CD4-positive, alpha-beta memory T cell (primary cell): ENCODE measurements at regions of chr3 and their contacts with region 1.

Region 1: GRCh38 chr3:38346587-38347410 is at the start of gene XYLB:
- DNase-seq: peak; percentile 54 to 75 (median 72)
- H3K4me3 ChIP-seq: peak within 1 kb of the TSS; percentile 11 to 57
- H3K4me3 Mint-ChIP-seq: peak within 1 kb of the TSS; percentile 80 to 89 (median 82)
- H3K27ac ChIP-seq: peak within 1 kb of the TSS; percentile 28
- H3K27ac Mint-ChIP-seq: peak within 1 kb of the TSS in 2 of 7 donors; percentile 31 to 62
- H3K4me1 ChIP-seq: peaks cover 17% of the 10 kb centered on the region
- H3K4me1 Mint-ChIP-seq: peaks cover 0 to 4% (median 3%) of the 10 kb centered on the region in 4 donors
- H3K27me3 ChIP-seq: no peaks in the 10 kb centered on the region
- H3K27me3 Mint-ChIP-seq: no peaks in the 10 kb centered on the region
- total RNA-seq, gene XYLB: 0.47 to 0.61 TPM

Region 2: GRCh38 chr3:37956723-37957528 is 389.9 kb before region 1 on chr3:
- CTCF ChIA-PET with region 1: no interaction called
- POLR2A ChIA-PET with region 1: no interaction called
- intact Hi-C with region 1: no loop called
- DNase-seq: peak in 2 of 5 donors; percentile 5 to 10
- H3K4me3 ChIP-seq: no peak overlapping the region
- H3K4me3 Mint-ChIP-seq: peak overlapping the region in 5 of 8 donors; percentile 21 to 69 (median 52)
- H3K27ac ChIP-seq: no peak overlapping the region
- H3K27ac Mint-ChIP-seq: peak overlapping the region; percentile 68 to 93 (median 88)
- H3K4me1 ChIP-seq: peaks cover 15% of the 10 kb centered on the region
- H3K4me1 Mint-ChIP-seq: peaks cover 13 to 30% (median 19%) of the 10 kb centered on the region in 4 donors
- H3K27me3 ChIP-seq: no peaks in the 10 kb centered on the region
- H3K27me3 Mint-ChIP-seq: no peaks in the 10 kb centered on the region

Region 3: GRCh38 chr3:38117748-38118420 is 228.9 kb before region 1 on chr3:
- CTCF ChIA-PET with region 1: interaction called, 38 read pairs
- POLR2A ChIA-PET with region 1: no interaction called
- intact Hi-C with region 1: loop called (anchors 1 kb)
- DNase-seq: peak; percentile 66 to 74 (median 70)
- H3K4me3 ChIP-seq: no peak overlapping the region
- H3K4me3 Mint-ChIP-seq: no peak overlapping the region
- H3K27ac ChIP-seq: no peak overlapping the region
- H3K27ac Mint-ChIP-seq: peak overlapping the region in 4 of 7 donors; percentile 25 to 86 (median 77)
- H3K4me1 ChIP-seq: no peaks in the 10 kb centered on the region
- H3K4me1 Mint-ChIP-seq: peaks cover 2 to 15% (median 6%) of the 10 kb centered on the region in 4 donors
- H3K27me3 ChIP-seq: no peaks in the 10 kb centered on the region
- H3K27me3 Mint-ChIP-seq: no peaks in the 10 kb centered on the region

Region 4: DNA sequence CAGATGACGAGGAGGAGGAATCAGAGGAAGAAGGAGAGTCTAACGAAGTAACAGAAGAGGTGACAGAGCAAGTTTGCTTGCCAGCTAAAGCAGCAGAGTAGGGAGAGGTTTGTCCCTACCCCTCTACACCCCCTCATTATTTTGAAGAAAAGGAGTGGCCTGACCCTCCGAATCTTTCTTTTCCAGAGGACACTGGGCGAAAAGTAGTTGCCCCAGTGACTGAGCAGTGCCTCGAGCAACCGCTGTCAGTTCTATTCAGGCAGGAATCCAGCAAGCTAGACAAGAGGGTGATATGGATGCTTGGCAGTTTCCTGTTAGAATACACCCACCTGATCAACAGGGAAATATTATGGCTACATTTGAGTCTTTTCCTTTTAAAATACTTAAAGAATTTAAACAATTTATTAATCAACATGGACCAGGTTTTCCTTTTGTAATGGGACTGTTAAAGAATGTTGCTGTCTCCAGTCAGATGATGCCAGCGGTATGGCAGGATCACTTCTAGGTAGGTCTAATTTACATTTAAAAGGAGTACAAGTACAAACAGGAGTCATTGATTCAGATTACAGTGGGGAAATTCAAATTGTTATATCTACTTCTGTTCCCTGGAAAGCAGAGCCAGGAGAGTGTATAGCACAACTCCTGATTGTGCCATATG is 75.0 kb after region 1 on chr3:
- CTCF ChIA-PET with region 1: interaction called, 20 read pairs
- POLR2A ChIA-PET with region 1: interaction called, 3 read pairs
- intact Hi-C with region 1: no loop called
- DNase-seq: no peak
- H3K4me3 ChIP-seq: no peak overlapping the region
- H3K4me3 Mint-ChIP-seq: peak overlapping the region in 3 of 8 donors; percentile 35 to 78 (median 54)
- H3K27ac ChIP-seq: no peak overlapping the region
- H3K27ac Mint-ChIP-seq: peak overlapping the region in 1 of 7 donors; percentile 89
- H3K4me1 ChIP-seq: peaks cover 40% of the 10 kb centered on the region
- H3K4me1 Mint-ChIP-seq: peaks cover 26 to 44% (median 32%) of the 10 kb centered on the region in 4 donors
- H3K27me3 ChIP-seq: no peaks in the 10 kb centered on the region
- H3K27me3 Mint-ChIP-seq: no peaks in the 10 kb centered on the region

Region 5: DNA sequence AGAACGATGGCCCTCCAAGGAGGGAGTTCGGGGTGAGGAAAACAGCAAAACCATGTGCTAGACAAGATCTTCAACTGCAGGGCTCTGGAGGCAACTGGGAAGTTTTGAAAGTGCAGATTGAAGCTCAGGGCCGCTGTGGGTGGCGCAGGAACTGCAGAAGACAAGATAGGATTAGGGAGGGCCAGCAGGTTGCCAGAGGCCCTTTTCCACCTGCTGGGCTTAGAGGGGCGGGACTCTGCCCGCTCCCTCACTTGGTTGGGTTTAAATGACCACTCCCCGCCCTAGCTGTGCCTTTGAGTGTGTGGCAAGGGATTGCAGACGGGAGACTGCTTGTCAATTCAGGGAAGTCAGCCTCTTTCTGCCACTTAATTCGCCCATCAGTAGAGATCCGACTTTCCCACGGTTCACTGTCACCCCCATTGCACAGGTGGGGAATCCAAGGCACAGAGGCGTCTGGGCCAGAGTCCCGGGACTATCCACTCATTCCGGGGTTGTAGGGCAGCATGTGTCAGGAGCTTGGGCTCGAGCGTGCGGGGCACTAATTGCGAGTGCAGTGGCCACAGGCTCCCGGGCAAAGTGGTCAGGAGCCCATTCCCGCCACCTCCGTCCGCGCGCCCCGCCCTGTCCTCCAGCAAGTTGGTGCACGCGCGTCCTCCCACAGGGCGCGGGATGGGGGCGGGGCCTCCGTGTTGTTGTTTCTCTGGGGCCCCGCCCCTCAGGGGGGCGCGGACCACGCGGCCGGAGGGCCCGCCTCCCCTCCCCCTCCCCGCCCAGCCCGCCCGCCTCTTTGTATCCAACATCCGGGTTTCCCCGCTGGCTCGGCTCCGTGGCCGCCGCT is 106.5 kb after region 1 on chr3 and contains the start of gene ACVR2B:
- CTCF ChIA-PET with region 1: interaction called, 21 read pairs
- POLR2A ChIA-PET with region 1: interaction called, 12 read pairs
- intact Hi-C with region 1: loop called (anchors 1 kb)
- DNase-seq: peak; percentile 56 to 62 (median 57)
- H3K4me3 ChIP-seq: peak within 1 kb of the TSS; percentile 72 to 78
- H3K4me3 Mint-ChIP-seq: peak within 1 kb of the TSS; percentile 96 to 100 (median 97)
- H3K27ac ChIP-seq: peak within 1 kb of the TSS; percentile 31
- H3K27ac Mint-ChIP-seq: peak within 1 kb of the TSS; percentile 41 to 95 (median 92)
- H3K4me1 ChIP-seq: peaks cover 17% of the 10 kb centered on the region
- H3K4me1 Mint-ChIP-seq: peaks cover 10 to 39% (median 19%) of the 10 kb centered on the region in 4 donors
- H3K27me3 ChIP-seq: no peaks in the 10 kb centered on the region
- H3K27me3 Mint-ChIP-seq: no peaks in the 10 kb centered on the region
- total RNA-seq, gene ACVR2B: 12.3 to 13.2 TPM

Region 6: GRCh38 chr3:38473229-38473628 is 126.4 kb after region 1 on chr3:
- CTCF ChIA-PET with region 1: interaction called, 230 read pairs
- POLR2A ChIA-PET with region 1: no interaction called
- intact Hi-C with region 1: no loop called
- DNase-seq: no peak
- H3K4me3 ChIP-seq: no peak overlapping the region
- H3K4me3 Mint-ChIP-seq: no peak overlapping the region
- H3K27ac ChIP-seq: no peak overlapping the region
- H3K27ac Mint-ChIP-seq: peak overlapping the region in 5 of 7 donors; percentile 46 to 89 (median 57)
- H3K4me1 ChIP-seq: peaks cover 17% of the 10 kb centered on the region
- H3K4me1 Mint-ChIP-seq: peaks cover 13 to 33% (median 26%) of the 10 kb centered on the region in 4 donors
- H3K27me3 ChIP-seq: no peaks in the 10 kb centered on the region
- H3K27me3 Mint-ChIP-seq: no peaks in the 10 kb centered on the region

Region 7: GRCh38 chr3:38479431-38480092 is 132.8 kb after region 1 on chr3:
- CTCF ChIA-PET with region 1: interaction called, 230 read pairs
- POLR2A ChIA-PET with region 1: interaction called, 17 read pairs
- intact Hi-C with region 1: loop called (anchors 1 kb)
- DNase-seq: peak in 4 of 5 donors; percentile 46 to 58 (median 48)
- H3K4me3 ChIP-seq: no peak overlapping the region
- H3K4me3 Mint-ChIP-seq: no peak overlapping the region
- H3K27ac ChIP-seq: no peak overlapping the region
- H3K27ac Mint-ChIP-seq: peak overlapping the region in 2 of 7 donors; percentile 3 to 9
- H3K4me1 ChIP-seq: no peaks in the 10 kb centered on the region
- H3K4me1 Mint-ChIP-seq: peaks cover 0 to 12% (median 3%) of the 10 kb centered on the region in 4 donors
- H3K27me3 ChIP-seq: no peaks in the 10 kb centered on the region
- H3K27me3 Mint-ChIP-seq: no peaks in the 10 kb centered on the region

Region 8: DNA sequence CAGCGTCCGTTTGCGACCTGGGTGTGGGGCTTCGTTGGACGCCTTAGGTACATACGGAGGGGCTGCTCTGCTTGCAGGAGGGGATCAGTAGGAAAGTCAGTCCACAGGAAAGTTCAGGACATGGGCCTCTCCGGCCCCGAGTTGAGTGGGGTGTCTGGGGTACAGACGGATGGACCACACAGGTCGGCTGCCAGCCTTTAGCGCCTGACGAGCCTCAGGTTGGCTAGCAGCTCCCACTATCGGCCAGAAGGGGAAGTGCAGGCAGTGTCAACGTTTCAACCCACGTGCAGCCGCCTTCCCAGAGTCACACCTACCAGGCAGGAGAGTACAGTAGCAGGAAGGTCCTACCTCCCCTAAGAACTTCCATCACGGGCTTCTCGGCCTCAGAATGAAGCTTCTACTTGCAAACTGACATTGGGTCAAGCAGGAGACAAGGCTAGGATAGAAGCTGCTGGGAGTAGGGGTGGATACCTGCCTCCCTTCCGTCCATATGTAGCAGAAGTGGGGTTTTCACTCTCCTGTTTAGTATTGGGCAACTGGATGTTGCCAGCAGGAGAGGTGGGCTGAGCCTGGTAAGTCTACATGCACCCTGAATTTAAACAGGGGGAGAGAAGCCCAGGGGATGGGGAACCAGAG is 304.5 kb after region 1 on chr3:
- CTCF ChIA-PET with region 1: interaction called, 4 read pairs
- POLR2A ChIA-PET with region 1: no interaction called
- intact Hi-C with region 1: loop called (anchors 5 kb)
- DNase-seq: peak in 4 of 5 donors; percentile 64 to 72 (median 70)
- H3K4me3 ChIP-seq: no peak overlapping the region
- H3K4me3 Mint-ChIP-seq: peak overlapping the region in 4 of 8 donors; percentile 7 to 73 (median 53)
- H3K27ac ChIP-seq: no peak overlapping the region
- H3K27ac Mint-ChIP-seq: peak overlapping the region in 2 of 7 donors; percentile 49 to 76
- H3K4me1 ChIP-seq: peaks cover 22% of the 10 kb centered on the region
- H3K4me1 Mint-ChIP-seq: peaks cover 6 to 10% (median 8%) of the 10 kb centered on the region in 4 donors
- H3K27me3 ChIP-seq: peaks cover 10% of the 10 kb centered on the region
- H3K27me3 Mint-ChIP-seq: peaks cover 8 to 26% of the 10 kb centered on the region in 2 donors

Region 9: DNA sequence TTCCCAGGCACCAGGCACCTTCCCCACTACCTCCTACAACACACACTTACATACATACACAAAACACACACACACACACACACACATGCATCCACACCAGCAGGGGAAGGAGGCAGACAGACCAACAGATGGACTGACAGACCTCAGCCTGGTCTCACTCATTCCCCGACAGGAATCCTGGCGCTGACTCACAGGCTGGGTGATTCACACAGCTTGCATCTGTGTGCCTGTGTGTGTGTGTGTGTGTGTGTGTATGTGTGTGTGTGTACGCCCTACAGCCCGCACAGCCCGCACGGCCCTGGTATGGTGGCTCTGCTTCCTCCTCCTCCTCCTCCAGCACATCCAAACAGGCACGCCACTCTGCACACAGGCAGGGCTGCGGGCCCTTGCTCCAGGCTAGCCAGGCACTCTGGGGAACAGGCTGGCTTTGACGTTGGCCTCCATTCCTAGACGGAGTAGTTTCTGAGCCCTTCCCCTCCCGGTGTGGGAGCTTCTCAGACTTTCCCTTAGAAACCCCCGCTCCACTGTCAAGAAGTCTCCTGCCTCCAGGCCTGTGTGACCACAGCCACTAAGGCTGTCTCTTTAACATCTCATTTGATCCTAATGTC is 800.3 kb after region 1 on chr3:
- CTCF ChIA-PET with region 1: no interaction called
- POLR2A ChIA-PET with region 1: no interaction called
- intact Hi-C with region 1: no loop called
- DNase-seq: peak in 3 of 5 donors; percentile 48 to 85 (median 57)
- H3K4me3 ChIP-seq: peak overlapping the region; percentile 25 to 26
- H3K4me3 Mint-ChIP-seq: peak overlapping the region; percentile 79 to 99 (median 86)
- H3K27ac ChIP-seq: peak overlapping the region; percentile 69
- H3K27ac Mint-ChIP-seq: peak overlapping the region; percentile 97 to 100 (median 99)
- H3K4me1 ChIP-seq: peaks cover 63% of the 10 kb centered on the region
- H3K4me1 Mint-ChIP-seq: peaks cover 57 to 94% (median 68%) of the 10 kb centered on the region in 4 donors
- H3K27me3 ChIP-seq: no peaks in the 10 kb centered on the region
- H3K27me3 Mint-ChIP-seq: no peaks in the 10 kb centered on the region

Region 10: DNA sequence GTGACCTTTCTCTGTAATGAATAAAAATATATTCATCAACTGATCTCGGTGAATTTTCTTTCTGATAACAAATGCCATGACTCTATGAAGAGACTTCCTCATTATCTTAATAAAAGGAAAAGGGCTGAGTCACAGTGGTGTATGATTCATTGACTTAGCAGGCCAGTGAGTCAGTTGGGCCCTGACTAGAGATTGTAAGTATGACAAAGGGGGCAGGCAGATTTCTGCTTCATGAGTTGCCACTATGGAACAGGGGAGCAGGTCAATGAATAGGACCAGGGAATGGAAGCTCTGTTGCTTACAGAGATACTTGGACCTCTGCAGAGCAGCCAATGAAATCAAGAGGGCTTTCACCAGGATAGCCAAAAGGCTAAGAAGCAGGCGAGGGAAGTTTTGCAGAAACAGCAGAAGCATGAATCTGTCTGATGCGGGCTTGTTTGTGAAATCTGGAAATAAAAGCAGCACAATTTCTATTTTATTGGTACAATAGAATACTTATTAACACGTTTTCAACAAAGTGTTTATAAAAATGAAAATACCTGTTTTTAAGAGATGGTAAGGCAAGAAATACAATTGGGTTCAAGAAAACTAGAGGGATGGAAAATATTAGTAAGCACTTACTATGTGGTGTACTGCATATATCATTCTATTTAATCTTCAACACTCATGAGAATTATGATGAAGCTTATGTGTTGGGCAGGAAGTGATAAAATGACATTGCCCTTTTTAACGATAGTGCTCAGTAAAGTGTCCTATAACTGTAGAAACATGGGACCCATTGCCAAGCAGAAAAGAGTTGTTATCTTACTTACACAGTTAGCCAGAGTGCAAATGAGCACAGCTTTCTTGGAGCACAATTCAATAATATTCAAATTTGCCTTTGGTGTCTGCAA is 1292.8 kb after region 1 on chr3:
- CTCF ChIA-PET with region 1: no interaction called
- POLR2A ChIA-PET with region 1: no interaction called
- intact Hi-C with region 1: no loop called
- DNase-seq: no peak
- H3K4me3 ChIP-seq: no peak overlapping the region
- H3K4me3 Mint-ChIP-seq: no peak overlapping the region
- H3K27ac ChIP-seq: no peak overlapping the region
- H3K27ac Mint-ChIP-seq: no peak overlapping the region
- H3K4me1 ChIP-seq: no peaks in the 10 kb centered on the region
- H3K4me1 Mint-ChIP-seq: no peaks in the 10 kb centered on the region
- H3K27me3 ChIP-seq: no peaks in the 10 kb centered on the region
- H3K27me3 Mint-ChIP-seq: peaks cover 4 to 5% of the 10 kb centered on the region in 2 donors